ENCODE measurements at regions of chr2 and their contacts with region 1.

Region 1: DNA sequence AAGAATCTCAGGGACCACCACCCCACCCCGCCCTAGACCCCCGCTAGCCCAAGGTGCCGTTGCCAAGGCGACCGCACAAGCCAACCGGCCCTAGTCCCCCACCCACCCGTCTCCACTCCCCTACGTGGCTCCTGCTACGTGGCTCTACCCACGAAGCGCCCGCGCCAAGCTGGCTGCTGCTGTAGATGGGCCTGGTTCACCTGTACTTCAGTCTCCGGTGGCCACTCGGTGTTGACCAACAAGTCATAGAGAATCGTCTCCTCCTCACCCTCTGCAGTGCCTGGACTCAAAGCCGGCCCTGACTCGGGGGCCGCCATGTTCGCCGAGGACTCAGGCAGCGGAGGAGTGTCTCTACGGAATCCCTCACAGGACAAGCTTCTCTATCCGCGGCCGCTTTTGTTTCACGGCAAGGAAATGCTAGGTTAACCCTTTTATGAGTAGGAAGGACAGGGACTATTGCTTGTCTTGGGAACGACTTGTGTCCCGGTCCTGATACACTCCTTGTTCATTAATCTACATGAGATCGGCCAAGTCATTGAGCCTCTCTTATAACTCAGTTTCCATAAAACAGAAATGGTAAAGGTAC is at the start of gene NBAS:
- DNase-seq: peak; percentile 74 to 78 (median 76)
- H3K4me3 ChIP-seq: peak within 1 kb of the TSS; percentile 50 to 53
- H3K4me3 Mint-ChIP-seq: peak within 1 kb of the TSS; percentile 99 to 100 (median 100)
- H3K27ac ChIP-seq: peak within 1 kb of the TSS; percentile 56
- H3K27ac Mint-ChIP-seq: peak within 1 kb of the TSS; percentile 84 to 99 (median 98)
- H3K4me1 ChIP-seq: peaks cover 25% of the 10 kb centered on the region
- H3K4me1 Mint-ChIP-seq: peaks cover 30 to 46% (median 37%) of the 10 kb centered on the region in 4 donors
- H3K27me3 ChIP-seq: no peaks in the 10 kb centered on the region
- H3K27me3 Mint-ChIP-seq: no peaks in the 10 kb centered on the region
- total RNA-seq, gene NBAS: 34.9 to 37.0 TPM

Region 2: GRCh38 chr2:15177103-15177502 is 384.0 kb before region 1 on chr2:
- CTCF ChIA-PET with region 1: no interaction called
- POLR2A ChIA-PET with region 1: no interaction called
- intact Hi-C with region 1: loop called (anchors 10 kb)
- DNase-seq: peak; percentile 72 to 84 (median 80)
- H3K4me3 ChIP-seq: no peak overlapping the region
- H3K4me3 Mint-ChIP-seq: peak overlapping the region; percentile 5 to 75 (median 49)
- H3K27ac ChIP-seq: no peak overlapping the region
- H3K27ac Mint-ChIP-seq: peak overlapping the region; percentile 73 to 91 (median 84)
- H3K4me1 ChIP-seq: peaks cover 37% of the 10 kb centered on the region
- H3K4me1 Mint-ChIP-seq: peaks cover 25 to 52% (median 41%) of the 10 kb centered on the region in 4 donors
- H3K27me3 ChIP-seq: no peaks in the 10 kb centered on the region
- H3K27me3 Mint-ChIP-seq: no peaks in the 10 kb centered on the region

Region 3: GRCh38 chr2:15460112-15460620 is 100.9 kb before region 1 on chr2:
- CTCF ChIA-PET with region 1: no interaction called
- POLR2A ChIA-PET with region 1: no interaction called
- intact Hi-C with region 1: no loop called
- DNase-seq: no peak
- H3K4me3 ChIP-seq: no peak overlapping the region
- H3K4me3 Mint-ChIP-seq: no peak overlapping the region
- H3K27ac ChIP-seq: no peak overlapping the region
- H3K27ac Mint-ChIP-seq: no peak overlapping the region
- H3K4me1 ChIP-seq: no peaks in the 10 kb centered on the region
- H3K4me1 Mint-ChIP-seq: peaks cover 0 to 2% (median 0%) of the 10 kb centered on the region in 4 donors
- H3K27me3 ChIP-seq: no peaks in the 10 kb centered on the region
- H3K27me3 Mint-ChIP-seq: no peaks in the 10 kb centered on the region

Region 4: GRCh38 chr2:15591692-15592463 is 30.8 kb after region 1 on chr2 and contains the start of gene DDX1:
- CTCF ChIA-PET with region 1: interaction called, 6 read pairs
- POLR2A ChIA-PET with region 1: interaction called, 36 read pairs
- intact Hi-C with region 1: loop called (anchors 1 kb)
- DNase-seq: peak; percentile 83 to 86 (median 84)
- H3K4me3 ChIP-seq: peak within 1 kb of the TSS; percentile 48 to 71
- H3K4me3 Mint-ChIP-seq: peak within 1 kb of the TSS; percentile 86 to 96 (median 92)
- H3K27ac ChIP-seq: peak within 1 kb of the TSS; percentile 76
- H3K27ac Mint-ChIP-seq: peak within 1 kb of the TSS; percentile 87 to 97 (median 95)
- H3K4me1 ChIP-seq: peaks cover 31% of the 10 kb centered on the region
- H3K4me1 Mint-ChIP-seq: peaks cover 27 to 47% (median 34%) of the 10 kb centered on the region in 4 donors
- H3K27me3 ChIP-seq: no peaks in the 10 kb centered on the region
- H3K27me3 Mint-ChIP-seq: no peaks in the 10 kb centered on the region
- total RNA-seq, gene DDX1: 58.3 to 61.7 TPM

Region 5: DNA sequence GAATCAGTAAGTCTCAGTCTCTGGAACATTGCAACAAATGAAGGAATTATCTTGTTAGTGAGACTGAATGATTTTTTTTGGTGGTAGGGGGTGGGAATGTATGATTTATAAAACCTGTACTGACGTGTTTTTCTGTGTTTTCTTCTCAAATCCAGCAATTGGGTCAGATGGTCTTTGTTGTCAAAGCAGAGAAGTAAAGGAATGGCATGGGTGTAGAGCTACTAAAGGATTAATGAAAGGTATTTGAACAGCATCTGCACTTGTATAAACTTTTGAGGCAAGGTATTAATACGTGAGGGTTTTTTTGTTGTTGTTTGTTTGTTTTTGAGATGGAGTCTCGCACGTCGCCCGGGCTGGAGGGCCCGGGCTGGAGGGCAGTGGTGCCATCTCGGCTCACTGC is 41.3 kb after region 1 on chr2:
- CTCF ChIA-PET with region 1: no interaction called
- POLR2A ChIA-PET with region 1: no interaction called
- intact Hi-C with region 1: no loop called
- DNase-seq: no peak
- H3K4me3 ChIP-seq: no peak overlapping the region
- H3K4me3 Mint-ChIP-seq: no peak overlapping the region
- H3K27ac ChIP-seq: no peak overlapping the region
- H3K27ac Mint-ChIP-seq: peak overlapping the region in 2 of 7 donors; percentile 24 to 64
- H3K4me1 ChIP-seq: no peaks in the 10 kb centered on the region
- H3K4me1 Mint-ChIP-seq: peaks cover 0 to 8% (median 3%) of the 10 kb centered on the region in 4 donors
- H3K27me3 ChIP-seq: no peaks in the 10 kb centered on the region
- H3K27me3 Mint-ChIP-seq: no peaks in the 10 kb centered on the region

Measured in CD4-positive, alpha-beta memory T cell (primary cell).